K562 (cell line): ENCODE measurements at regions of chr2 and their contacts with region 1.

Region 1: DNA sequence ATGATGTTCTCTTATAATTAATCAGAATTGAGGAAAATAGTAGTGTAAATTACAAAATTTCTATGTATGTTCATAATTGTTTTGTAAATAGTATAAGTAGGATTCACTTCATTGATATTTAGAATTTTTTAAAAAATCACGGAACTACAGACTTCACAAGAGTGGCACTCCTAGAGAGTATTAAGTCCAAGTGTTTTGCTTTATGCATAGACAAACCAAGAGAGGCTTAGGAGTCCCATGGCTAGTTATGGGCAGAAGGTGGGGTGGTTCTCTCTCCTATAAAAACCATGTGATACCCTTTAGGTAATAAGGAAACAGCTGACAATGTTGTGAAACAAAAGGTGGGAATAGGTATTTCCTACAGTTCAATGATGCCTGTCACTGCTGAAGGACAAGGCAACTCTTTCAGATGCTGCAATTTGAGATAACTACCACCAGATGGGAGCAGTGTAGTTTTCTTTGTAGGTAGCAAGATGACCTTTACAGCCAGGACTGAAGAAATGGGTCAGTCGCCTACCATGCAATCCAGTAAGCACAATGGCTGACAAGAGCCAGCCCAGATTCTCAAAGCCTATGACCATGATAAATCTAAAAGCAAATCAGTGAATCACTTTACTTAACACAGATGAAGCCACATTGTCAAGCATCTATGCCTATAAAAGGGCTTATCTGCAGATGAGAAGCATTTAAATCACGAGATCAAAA is 83.9 kb downstream of the AAK1 start:
- DNase-seq: peak; percentile 53 to 75 (median 61)
- ATAC-seq: peak; percentile 94
- H3K4me3 ChIP-seq: no peak overlapping the region
- H3K27ac ChIP-seq: no peak overlapping the region
- H3K4me1 ChIP-seq: peaks cover 0 to 4% of the 10 kb centered on the region in 2 experiments; a peak in 1 of 5 replicates
- H3K27me3 ChIP-seq: no peaks in the 10 kb centered on the region
- CTCF ChIP-seq: peak; percentile 78 to 91 (median 84)
- EP300 ChIP-seq: no peak
- POLR2A ChIP-seq: no peak
- RAD21 ChIP-seq: peak; percentile 93 to 97

Region 2: DNA sequence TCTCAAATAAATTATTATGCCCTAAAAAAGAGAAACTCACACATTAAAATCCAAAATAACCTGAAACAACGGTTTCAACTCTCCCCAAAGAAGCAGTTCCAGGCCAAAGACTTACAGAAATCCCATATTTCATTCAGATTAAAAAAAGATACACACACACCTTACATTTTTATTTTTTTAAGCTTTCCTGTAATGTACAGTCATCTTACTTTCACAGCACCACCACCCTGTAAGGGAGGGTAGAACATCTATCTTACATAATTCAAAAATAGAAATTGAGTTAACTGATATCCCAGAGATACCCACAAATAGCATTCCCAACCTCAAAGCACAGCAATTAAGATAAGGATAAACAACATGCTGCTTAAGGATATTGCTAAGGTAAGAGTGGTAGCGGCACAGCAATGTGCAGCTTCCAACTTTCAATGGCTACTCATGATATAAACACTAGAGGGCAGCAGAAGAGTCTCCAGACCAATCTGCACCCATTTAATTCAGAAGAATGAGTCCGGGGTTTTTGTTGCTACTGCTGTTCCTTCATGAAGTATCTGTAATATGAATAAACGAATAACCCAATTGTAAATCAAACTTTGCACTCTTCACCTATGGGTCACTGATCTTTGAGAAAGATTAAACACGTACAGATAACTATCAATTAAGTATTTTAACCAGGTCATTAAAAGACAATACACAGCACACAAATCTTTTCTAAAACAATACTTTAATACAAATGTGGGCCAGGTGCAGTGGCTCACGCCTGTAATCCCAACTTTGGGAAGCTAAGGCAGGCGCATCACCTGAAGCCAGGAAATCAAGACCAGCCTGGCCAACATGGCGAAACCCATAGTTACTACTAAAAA is 183.9 kb before region 1 on chr2:
- CTCF ChIA-PET with region 1: no interaction called
- POLR2A ChIA-PET with region 1: no interaction called
- in situ Hi-C with region 1: no loop called
- intact Hi-C with region 1: loop called (anchors 10 kb)
- DNase-seq: peak; percentile 39 to 68 (median 52)
- ATAC-seq: peak; percentile 85
- H3K4me3 ChIP-seq: no peak overlapping the region
- H3K27ac ChIP-seq: 0 out of 3 replicates have a peak overlapping the region, but pooled peaks have one; percentile 14
- H3K4me1 ChIP-seq: peaks cover 0 to 5% of the 10 kb centered on the region in 2 experiments; a peak in 2 of 5 replicates
- H3K27me3 ChIP-seq: no peaks in the 10 kb centered on the region
- CTCF ChIP-seq: peak; percentile 73 to 83 (median 75)
- EP300 ChIP-seq: no peak
- POLR2A ChIP-seq: no peak
- RAD21 ChIP-seq: peak; percentile 52 to 73

Region 3: DNA sequence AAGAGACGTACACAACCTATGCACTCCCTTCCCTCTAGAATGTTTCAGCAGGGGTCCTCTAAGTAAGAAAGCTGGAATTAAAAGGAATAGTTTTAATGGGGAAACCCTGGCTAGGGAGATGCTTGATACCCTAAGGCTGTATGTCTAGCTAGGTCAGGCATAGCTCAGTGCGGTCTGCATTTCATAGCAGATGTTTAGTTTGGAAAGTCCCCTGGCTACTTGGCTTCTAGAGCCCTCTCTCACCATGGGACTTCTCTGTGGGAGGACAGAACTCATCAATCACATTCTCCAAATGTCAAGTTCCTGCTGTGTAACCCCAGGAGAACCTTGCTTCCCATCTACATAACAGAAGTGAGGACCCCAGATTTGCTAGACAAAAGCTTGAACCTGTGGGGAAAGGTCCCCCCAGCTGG is 158.3 kb after region 1 on chr2:
- CTCF ChIA-PET with region 1: interaction called, 33 read pairs
- POLR2A ChIA-PET with region 1: no interaction called
- in situ Hi-C with region 1: no loop called
- intact Hi-C with region 1: loop called (anchors 1 kb)
- DNase-seq: no peak
- ATAC-seq: no peak
- H3K4me3 ChIP-seq: no peak overlapping the region
- H3K27ac ChIP-seq: no peak overlapping the region
- H3K4me1 ChIP-seq: peaks cover 0 to 8% of the 10 kb centered on the region in 2 experiments; a peak in 2 of 5 replicates
- H3K27me3 ChIP-seq: no peaks in the 10 kb centered on the region
- CTCF ChIP-seq: no peak
- EP300 ChIP-seq: no peak
- POLR2A ChIP-seq: no peak
- RAD21 ChIP-seq: no peak

Region 4: GRCh38 chr2:69798909-69799526 is 239.4 kb after region 1 on chr2:
- CTCF ChIA-PET with region 1: no interaction called
- POLR2A ChIA-PET with region 1: no interaction called
- in situ Hi-C with region 1: no loop called
- intact Hi-C with region 1: loop called (anchors 5 kb)
- DNase-seq: peak; percentile 89 to 97 (median 89)
- ATAC-seq: peak; percentile 95
- H3K4me3 ChIP-seq: peak overlapping the region; percentile 30
- H3K27ac ChIP-seq: peak overlapping the region; percentile 53; the same call in 1 of the 3 replicates
- H3K4me1 ChIP-seq: peaks cover 3 to 23% of the 10 kb centered on the region in 2 experiments; a peak in 4 of 5 replicates
- H3K27me3 ChIP-seq: no peaks in the 10 kb centered on the region; a peak in 1 of 5 replicates
- CTCF ChIP-seq: no peak
- EP300 ChIP-seq: peak; percentile 95
- POLR2A ChIP-seq: no peak
- RAD21 ChIP-seq: peak in 1 of 2 experiments; percentile 26; a peak in 3 of 4 replicates

Region 5: DNA sequence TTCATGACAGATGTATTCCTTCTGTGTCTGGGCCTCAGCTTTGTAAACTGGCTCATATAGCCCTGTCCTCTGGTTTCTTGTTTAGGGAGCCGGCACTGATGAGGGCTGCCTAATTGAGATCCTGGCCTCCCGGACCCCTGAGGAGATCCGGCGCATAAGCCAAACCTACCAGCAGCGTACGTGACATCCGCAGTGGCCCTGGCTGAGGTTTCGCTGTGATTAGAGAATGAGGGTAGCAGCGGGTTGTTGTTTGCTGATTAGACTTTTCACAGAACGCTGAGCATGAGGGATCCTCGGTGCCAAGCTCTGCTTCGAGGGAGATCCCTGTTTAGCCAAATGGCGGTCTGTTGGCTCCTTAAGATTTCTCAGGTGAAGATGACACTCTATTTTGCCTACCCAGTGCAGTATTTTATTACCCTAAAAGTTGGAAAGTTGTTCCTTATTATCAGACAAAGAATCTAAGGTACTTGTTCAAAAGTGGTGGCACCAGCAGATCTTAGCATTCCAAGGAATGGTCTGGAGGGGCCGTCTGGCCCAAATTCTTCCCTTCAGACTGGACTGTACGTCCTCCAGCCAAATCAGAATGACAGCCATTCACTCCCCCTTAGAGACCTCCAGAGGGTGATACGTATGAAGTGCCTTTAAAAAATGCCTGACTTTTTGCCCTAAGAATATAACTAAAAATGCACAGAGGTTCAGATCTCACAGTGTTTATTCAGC is 248.4 kb after region 1 on chr2:
- CTCF ChIA-PET with region 1: no interaction called
- POLR2A ChIA-PET with region 1: no interaction called
- in situ Hi-C with region 1: loop called (anchors 5 kb)
- intact Hi-C with region 1: no loop called
- DNase-seq: no peak
- ATAC-seq: no peak
- H3K4me3 ChIP-seq: no peak overlapping the region
- H3K27ac ChIP-seq: no peak overlapping the region
- H3K4me1 ChIP-seq: peaks cover 0 to 3% of the 10 kb centered on the region in 2 experiments; a peak in 2 of 5 replicates
- H3K27me3 ChIP-seq: no peaks in the 10 kb centered on the region
- CTCF ChIP-seq: no peak
- EP300 ChIP-seq: no peak
- POLR2A ChIP-seq: no peak
- RAD21 ChIP-seq: no peak

Region 6: DNA sequence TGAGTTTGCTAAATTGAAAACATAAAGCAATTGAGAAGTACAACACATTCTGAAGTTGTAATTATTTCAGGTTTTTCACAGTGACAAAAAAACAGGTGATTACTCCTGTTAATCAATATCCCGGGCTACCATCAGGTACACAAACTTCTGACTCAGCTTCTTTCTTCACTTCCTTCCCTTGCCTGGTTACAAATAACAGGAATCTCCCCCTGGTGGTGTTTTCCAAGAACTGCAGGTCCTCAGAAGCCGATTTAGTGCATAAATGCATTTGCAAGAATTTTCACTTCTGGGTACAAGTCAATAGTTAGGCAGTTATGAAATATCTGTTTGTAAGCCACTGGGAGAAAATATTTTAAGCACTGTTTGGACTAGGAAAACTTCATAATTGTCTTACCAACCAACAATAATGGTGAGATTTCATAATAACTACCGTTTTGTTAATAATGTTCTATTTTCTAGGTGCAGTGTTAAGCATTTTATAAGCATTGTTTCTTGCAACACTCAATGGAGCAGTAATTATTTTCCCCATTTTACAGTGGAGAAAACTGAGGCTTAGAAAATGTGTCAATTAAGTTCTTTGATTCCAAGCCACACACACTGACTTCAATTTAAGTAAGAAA is 257.4 kb after region 1 on chr2:
- CTCF ChIA-PET with region 1: interaction called, 3 read pairs
- POLR2A ChIA-PET with region 1: no interaction called
- in situ Hi-C with region 1: no loop called
- intact Hi-C with region 1: loop called (anchors 5 kb)
- DNase-seq: peak; percentile 61 to 87 (median 64)
- ATAC-seq: peak; percentile 84
- H3K4me3 ChIP-seq: no peak overlapping the region
- H3K27ac ChIP-seq: no peak overlapping the region
- H3K4me1 ChIP-seq: peaks cover 10 to 15% of the 10 kb centered on the region in 2 experiments; a peak in 4 of 5 replicates
- H3K27me3 ChIP-seq: no peaks in the 10 kb centered on the region
- CTCF ChIP-seq: peak; percentile 79 to 84 (median 80)
- EP300 ChIP-seq: no peak
- POLR2A ChIP-seq: no peak
- RAD21 ChIP-seq: peak; percentile 82 to 88

Region 7: GRCh38 chr2:69902213-69902922 is 342.8 kb after region 1 on chr2:
- CTCF ChIA-PET with region 1: no interaction called
- POLR2A ChIA-PET with region 1: no interaction called
- in situ Hi-C with region 1: no loop called
- intact Hi-C with region 1: no loop called
- DNase-seq: no peak
- ATAC-seq: no peak; the same call in 2 of the 3 replicates
- H3K4me3 ChIP-seq: no peak overlapping the region
- H3K27ac ChIP-seq: peak overlapping the region; percentile 46; the same call in 1 of the 3 replicates
- H3K4me1 ChIP-seq: peaks cover 2 to 11% of the 10 kb centered on the region in 2 experiments; a peak in 3 of 5 replicates
- H3K27me3 ChIP-seq: no peaks in the 10 kb centered on the region
- CTCF ChIP-seq: no peak
- EP300 ChIP-seq: no peak
- POLR2A ChIP-seq: no peak
- RAD21 ChIP-seq: no peak